ENCODE measurements at regions of chr13 and their contacts with region 1.

Region 1: DNA sequence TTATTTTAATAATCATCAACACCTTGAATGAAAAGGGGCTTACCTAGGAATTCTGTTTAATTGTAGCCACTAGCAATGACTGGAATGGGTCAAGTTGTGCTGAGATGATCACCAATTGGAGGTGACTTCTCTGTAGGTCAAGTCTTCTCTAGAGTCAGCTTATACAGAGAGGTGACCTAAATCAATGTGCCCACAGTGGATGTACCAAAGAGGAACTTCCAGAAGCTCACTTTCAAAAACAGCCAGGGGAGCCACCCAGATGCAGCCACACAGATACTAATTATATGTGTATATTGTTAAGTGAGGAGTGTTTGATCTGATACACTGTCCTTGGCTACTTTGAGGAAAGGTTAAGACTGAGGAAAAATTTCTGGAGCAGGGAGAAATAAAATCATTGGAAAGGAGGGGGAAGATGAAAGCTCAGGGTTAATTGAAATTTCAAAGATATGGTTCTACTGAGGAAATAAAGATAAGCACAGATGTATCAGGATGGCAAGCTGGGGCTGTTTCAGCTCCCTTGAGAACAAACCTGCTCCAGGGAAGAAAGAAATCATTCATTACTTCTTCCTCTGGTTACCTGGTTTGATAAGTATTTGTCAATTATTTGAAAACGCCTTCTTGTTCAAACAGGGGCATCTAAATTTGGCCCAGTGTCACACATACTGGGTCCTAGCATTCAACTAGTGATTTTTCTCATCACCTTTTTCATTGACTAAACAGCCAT is 5.1 kb downstream of the GPR183 start:
- DNase-seq: no peak
- ATAC-seq: peak; percentile 39
- H3K4me3 ChIP-seq: peak overlapping the region; percentile 98
- H3K27ac ChIP-seq: peak overlapping the region; percentile 93
- H3K4me1 ChIP-seq: peaks cover 18% of the 10 kb centered on the region
- H3K27me3 ChIP-seq: no peaks in the 10 kb centered on the region
- CTCF ChIP-seq: no peak
- EP300 ChIP-seq: no peak
- POLR2A ChIP-seq: no peak
- RAD21 ChIP-seq: no peak

Region 2: DNA sequence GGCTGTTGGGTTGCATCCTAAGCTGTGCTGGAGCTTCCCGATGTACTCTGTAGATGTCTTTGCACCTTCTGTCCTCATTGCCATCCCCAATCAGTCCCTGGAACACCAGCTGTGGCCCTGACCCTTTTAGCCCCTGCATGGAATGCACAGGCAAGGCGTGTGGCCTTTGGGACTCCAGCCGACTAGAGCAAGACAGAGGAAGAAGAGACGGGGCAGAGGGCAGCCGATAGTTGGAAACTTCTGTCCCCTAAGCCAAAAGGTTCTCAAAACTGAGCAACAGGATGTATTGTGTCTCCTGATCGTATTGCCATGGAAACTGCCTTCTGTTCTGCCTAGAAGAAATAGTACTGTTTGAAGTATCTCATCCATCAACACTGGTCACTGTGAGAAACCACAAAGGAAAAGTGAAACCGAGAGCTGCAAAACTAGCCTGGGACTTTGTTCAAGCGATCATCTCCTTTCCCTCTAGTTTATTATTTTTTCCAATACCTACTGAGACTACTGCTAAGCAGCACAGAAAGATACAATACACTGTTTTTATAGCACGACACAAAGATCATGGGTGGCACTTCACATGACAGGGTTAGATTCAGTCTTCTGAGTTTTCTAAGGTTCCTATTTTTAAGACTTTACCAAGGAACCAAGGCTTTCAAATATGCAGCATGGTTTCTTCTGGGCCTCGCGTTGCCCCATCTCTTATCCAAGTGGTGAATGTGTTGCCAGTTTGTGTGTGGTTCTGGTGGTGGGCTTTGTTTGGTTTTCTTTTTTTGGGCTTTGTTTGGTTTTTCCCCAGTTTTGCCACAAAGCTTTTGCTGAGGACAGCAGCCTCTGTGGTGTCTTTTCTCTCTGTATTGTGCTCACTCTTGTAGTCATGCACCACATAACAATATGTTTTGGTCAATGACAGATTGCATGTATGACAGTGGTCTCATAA is 54.4 kb after region 1 on chr13:
- CTCF ChIA-PET with region 1: interaction called, 7 read pairs
- POLR2A ChIA-PET with region 1: interaction called, 4 read pairs
- RAD21 ChIA-PET with region 1: interaction called, 99 read pairs
- SMC1A ChIA-PET with region 1: interaction called, 18 read pairs
- in situ Hi-C with region 1: no loop called
- intact Hi-C with region 1: loop called (anchors 2 kb)
- DNase-seq: peak; percentile 92
- ATAC-seq: peak; percentile 81
- H3K4me3 ChIP-seq: peak overlapping the region; percentile 41; the same call in 1 of the 2 replicates
- H3K27ac ChIP-seq: peak overlapping the region; percentile 81
- H3K4me1 ChIP-seq: peaks cover 65% of the 10 kb centered on the region
- H3K27me3 ChIP-seq: no peaks in the 10 kb centered on the region
- CTCF ChIP-seq: no peak
- EP300 ChIP-seq: peak; percentile 43 to 83; a peak in 3 of 4 replicates
- POLR2A ChIP-seq: no peak
- RAD21 ChIP-seq: no peak

Region 3: GRCh38 chr13:99448546-99448945 is 146.5 kb after region 1 on chr13:
- CTCF ChIA-PET with region 1: no interaction called
- POLR2A ChIA-PET with region 1: no interaction called
- RAD21 ChIA-PET with region 1: no interaction called
- SMC1A ChIA-PET with region 1: no interaction called
- in situ Hi-C with region 1: no loop called
- intact Hi-C with region 1: no loop called
- DNase-seq: no peak
- ATAC-seq: no peak
- H3K4me3 ChIP-seq: no peak overlapping the region
- H3K27ac ChIP-seq: no peak overlapping the region
- H3K4me1 ChIP-seq: no peaks in the 10 kb centered on the region; the same call in 1 of the 2 replicates
- H3K27me3 ChIP-seq: no peaks in the 10 kb centered on the region
- CTCF ChIP-seq: no peak
- EP300 ChIP-seq: no peak
- POLR2A ChIP-seq: no peak
- RAD21 ChIP-seq: no peak

Measured in GM12878 (cell line).